ENCODE measurements at regions of chr11 and their contacts with region 1.

Region 1: DNA sequence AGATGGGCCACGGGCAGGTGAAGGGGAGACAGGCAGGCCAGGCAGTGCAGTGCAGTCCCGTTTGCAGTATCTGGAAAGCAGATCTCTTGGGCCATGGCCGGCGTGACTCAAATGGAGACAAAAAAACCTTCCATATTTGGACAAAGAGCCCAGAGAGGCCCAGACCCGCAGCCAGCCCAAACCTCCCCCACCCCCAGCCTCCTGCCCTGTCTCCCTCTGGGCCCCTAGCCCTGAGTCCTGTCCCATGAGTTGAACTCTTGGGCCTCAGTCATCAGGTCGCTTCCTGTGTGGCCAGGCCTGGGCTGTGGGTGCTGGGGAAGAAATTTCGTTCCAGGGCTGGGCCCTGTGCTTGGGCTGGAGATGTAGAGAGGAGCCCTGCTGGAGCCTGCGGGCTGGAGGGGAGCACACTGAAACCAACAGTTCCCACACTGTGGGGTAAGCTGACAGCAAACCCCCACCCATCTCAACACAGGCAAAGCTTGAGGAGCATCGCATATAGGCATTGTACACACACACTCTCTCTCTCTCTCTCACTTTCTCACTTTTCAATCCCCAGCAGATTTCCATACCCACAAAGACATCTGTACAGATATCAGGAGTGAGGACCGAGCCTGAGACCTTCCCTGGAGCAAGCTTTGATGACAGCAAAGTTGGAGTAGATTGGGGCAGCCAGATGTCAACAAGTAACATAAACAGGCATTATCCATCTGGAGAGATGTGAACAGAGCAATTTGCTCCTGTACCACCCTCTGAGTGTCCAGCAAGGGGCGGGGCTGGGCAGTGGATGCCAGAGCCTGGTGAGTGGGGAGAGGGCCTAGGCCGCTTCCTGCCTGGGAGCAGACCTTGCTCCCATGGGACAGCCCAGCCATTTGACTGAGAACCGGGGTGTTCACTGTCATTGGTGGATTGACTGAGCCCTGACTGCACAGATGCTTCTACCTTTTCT is 17.2 kb downstream of the ARHGEF17 start:
- DNase-seq: peak; percentile 83
- ATAC-seq: peak; percentile 83
- H3K4me3 ChIP-seq: peak overlapping the region; percentile 38; the same call in 1 of the 2 replicates
- H3K27ac ChIP-seq: peak overlapping the region; percentile 99
- H3K4me1 ChIP-seq: peaks cover 80% of the 10 kb centered on the region
- H3K27me3 ChIP-seq: no peaks in the 10 kb centered on the region
- CTCF ChIP-seq: no peak
- EP300 ChIP-seq: no peak; a peak in 2 of 4 replicates
- POLR2A ChIP-seq: peak; percentile 70
- RAD21 ChIP-seq: no peak

Region 2: GRCh38 chr11:73314117-73314961 is 11.0 kb before region 1 on chr11:
- CTCF ChIA-PET with region 1: interaction called, 126 read pairs
- POLR2A ChIA-PET with region 1: interaction called, 78 read pairs
- RAD21 ChIA-PET with region 1: interaction called, 115 read pairs
- SMC1A ChIA-PET with region 1: interaction called, 106 read pairs
- in situ Hi-C with region 1: no loop called
- intact Hi-C with region 1: loop called (anchors 1 kb)
- DNase-seq: no peak
- ATAC-seq: peak; percentile 73
- H3K4me3 ChIP-seq: peak overlapping the region; percentile 16
- H3K27ac ChIP-seq: peak overlapping the region; percentile 63
- H3K4me1 ChIP-seq: peaks cover 14% of the 10 kb centered on the region
- H3K27me3 ChIP-seq: no peaks in the 10 kb centered on the region
- CTCF ChIP-seq: no peak
- EP300 ChIP-seq: no peak
- POLR2A ChIP-seq: no peak
- RAD21 ChIP-seq: no peak

Region 3: DNA sequence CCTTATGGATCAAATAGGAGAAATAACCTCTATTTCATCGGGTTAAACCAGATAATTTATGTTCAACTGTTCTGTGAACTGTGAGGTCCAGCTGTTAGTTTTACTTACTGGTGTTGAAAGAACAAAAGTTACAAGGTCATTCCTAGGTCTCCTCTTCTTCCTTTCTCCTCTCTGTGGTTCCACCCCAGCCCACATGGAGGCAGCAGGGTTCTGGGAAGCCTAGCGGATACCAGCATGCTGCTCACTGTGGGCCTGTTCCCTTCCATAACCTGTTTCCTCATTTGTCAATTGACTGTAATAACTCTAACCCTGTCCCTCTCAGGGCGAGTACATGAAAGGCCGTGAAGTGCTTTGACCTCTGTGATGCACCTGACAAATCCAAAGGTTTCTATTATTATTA is 78.7 kb after region 1 on chr11:
- CTCF ChIA-PET with region 1: no interaction called
- POLR2A ChIA-PET with region 1: no interaction called
- RAD21 ChIA-PET with region 1: no interaction called
- SMC1A ChIA-PET with region 1: no interaction called
- in situ Hi-C with region 1: no loop called
- intact Hi-C with region 1: no loop called
- DNase-seq: no peak
- ATAC-seq: no peak
- H3K4me3 ChIP-seq: no peak overlapping the region
- H3K27ac ChIP-seq: no peak overlapping the region
- H3K4me1 ChIP-seq: no peaks in the 10 kb centered on the region
- H3K27me3 ChIP-seq: no peaks in the 10 kb centered on the region
- CTCF ChIP-seq: peak in 2 of 3 experiments; percentile 13 to 31; a peak in 3 of 6 replicates
- EP300 ChIP-seq: no peak
- POLR2A ChIP-seq: no peak
- RAD21 ChIP-seq: peak; percentile 47

Region 4: GRCh38 chr11:73469401-73469800 is 144.1 kb after region 1 on chr11:
- CTCF ChIA-PET with region 1: no interaction called
- POLR2A ChIA-PET with region 1: no interaction called
- RAD21 ChIA-PET with region 1: no interaction called
- SMC1A ChIA-PET with region 1: no interaction called
- in situ Hi-C with region 1: no loop called
- intact Hi-C with region 1: no loop called
- DNase-seq: no peak
- ATAC-seq: no peak
- H3K4me3 ChIP-seq: no peak overlapping the region
- H3K27ac ChIP-seq: no peak overlapping the region
- H3K4me1 ChIP-seq: peaks cover 3% of the 10 kb centered on the region; the same call in 1 of the 2 replicates
- H3K27me3 ChIP-seq: no peaks in the 10 kb centered on the region
- CTCF ChIP-seq: no peak
- EP300 ChIP-seq: no peak
- POLR2A ChIP-seq: no peak
- RAD21 ChIP-seq: no peak

Measured in GM12878 (cell line).